Aorta (tissue), 5 donors: ENCODE measurements at regions of chr4 and their contacts with region 1.

Region 1: GRCh38 chr4:133154725-133155124 is 5.6 kb downstream of the PCDH10 start:
- DNase-seq: no peak
- ATAC-seq: no peak
- H3K4me3 ChIP-seq: no peak overlapping the region
- H3K27ac ChIP-seq: no peak overlapping the region
- H3K4me1 ChIP-seq: no peaks in the 10 kb centered on the region
- H3K27me3 ChIP-seq: no peaks in the 10 kb centered on the region

Region 2: GRCh38 chr4:133068083-133068482 is 86.6 kb before region 1 on chr4:
- intact Hi-C with region 1: no loop called
- DNase-seq: no peak
- ATAC-seq: no peak
- H3K4me3 ChIP-seq: no peak overlapping the region
- H3K27ac ChIP-seq: no peak overlapping the region
- H3K4me1 ChIP-seq: no peaks in the 10 kb centered on the region
- H3K27me3 ChIP-seq: no peaks in the 10 kb centered on the region

Region 3: GRCh38 chr4:133188433-133189175 is 33.9 kb after region 1 on chr4:
- intact Hi-C with region 1: loop called in 1 of 2 experiments (anchors 5 kb)
- DNase-seq: no peak
- ATAC-seq: no peak
- H3K4me3 ChIP-seq: no peak overlapping the region
- H3K27ac ChIP-seq: no peak overlapping the region
- H3K4me1 ChIP-seq: no peaks in the 10 kb centered on the region
- H3K27me3 ChIP-seq: no peaks in the 10 kb centered on the region

Region 4: DNA sequence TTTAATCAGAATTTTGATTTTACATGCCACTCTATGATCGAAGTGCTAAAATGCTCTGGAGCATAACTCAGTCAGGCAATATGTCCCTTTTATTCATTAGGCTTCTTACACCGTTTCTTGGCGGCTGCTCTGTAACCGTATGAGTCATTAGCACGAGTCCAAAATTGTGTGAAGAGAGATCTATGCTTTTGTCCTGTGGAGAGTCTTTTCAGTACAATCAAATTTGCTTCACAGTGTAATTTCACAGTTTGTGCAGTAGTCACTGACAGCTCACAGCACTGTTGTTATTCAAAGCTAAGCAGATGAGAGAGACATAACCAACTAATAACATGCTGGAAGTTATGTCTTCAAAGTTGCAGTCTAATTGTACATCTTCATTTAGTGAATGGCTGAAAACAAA is 162.2 kb after region 1 on chr4:
- intact Hi-C with region 1: loop called in 1 of 2 experiments (anchors 5 kb)
- DNase-seq: no peak
- ATAC-seq: no peak
- H3K4me3 ChIP-seq: no peak overlapping the region
- H3K27ac ChIP-seq: no peak overlapping the region
- H3K4me1 ChIP-seq: no peaks in the 10 kb centered on the region
- H3K27me3 ChIP-seq: no peaks in the 10 kb centered on the region

Region 5: GRCh38 chr4:133483600-133484246 is 329.0 kb after region 1 on chr4:
- intact Hi-C with region 1: loop called in 1 of 2 experiments (anchors 2 kb)
- DNase-seq: no peak
- ATAC-seq: peak; percentile 44
- H3K4me3 ChIP-seq: no peak overlapping the region
- H3K27ac ChIP-seq: no peak overlapping the region
- H3K4me1 ChIP-seq: no peaks in the 10 kb centered on the region
- H3K27me3 ChIP-seq: no peaks in the 10 kb centered on the region

Region 6: DNA sequence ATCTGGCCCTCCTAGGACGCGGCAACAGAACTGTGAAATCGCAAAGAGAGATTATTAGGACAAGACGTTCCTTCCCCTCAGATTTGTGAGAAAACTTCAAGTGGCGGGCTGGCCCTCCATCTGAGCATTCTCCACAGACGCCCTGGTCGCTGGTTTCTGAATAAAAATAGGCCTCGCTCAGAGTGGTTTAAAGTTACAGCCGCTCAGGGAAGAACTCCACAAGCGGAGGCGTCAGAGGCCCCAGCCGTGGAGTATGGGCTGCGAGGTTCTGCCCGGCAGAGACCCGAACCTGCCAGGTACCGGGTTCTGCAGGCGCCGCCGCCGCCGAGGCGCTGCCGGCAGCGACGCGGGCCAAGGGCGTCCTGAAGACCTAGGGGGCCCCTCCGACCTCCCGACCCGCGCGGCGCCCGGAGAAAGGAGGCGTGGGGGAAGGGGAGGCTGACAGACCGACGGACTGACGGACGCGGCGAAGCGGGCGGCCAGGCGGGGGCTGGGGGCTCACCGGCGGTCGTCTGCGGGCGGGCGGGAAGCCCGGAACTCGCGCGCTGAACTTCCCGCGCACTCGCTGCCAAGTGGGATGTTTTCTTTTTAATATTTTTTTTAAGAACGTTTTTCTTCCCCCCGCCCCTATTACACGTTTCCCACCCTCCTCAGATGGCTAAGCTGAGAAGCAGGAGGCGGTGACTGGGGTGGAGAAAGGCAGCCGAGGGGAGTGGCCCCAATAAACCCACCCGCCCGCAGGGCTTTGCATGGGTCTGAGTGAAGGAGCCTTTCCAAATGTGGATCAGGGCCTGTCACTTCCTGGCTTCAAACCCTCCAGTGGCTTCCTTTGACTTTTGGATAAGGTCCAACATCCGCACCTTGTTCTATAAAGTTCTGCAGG is 1046.7 kb after region 1 on chr4 and contains the start of gene PABPC4L:
- intact Hi-C with region 1: loop called in 1 of 2 experiments (anchors 5 kb)
- DNase-seq: peak; percentile 68 to 82
- ATAC-seq: peak; percentile 89
- H3K4me3 ChIP-seq: peak within 1 kb of the TSS; percentile 64 to 75
- H3K27ac ChIP-seq: peak within 1 kb of the TSS; percentile 22 to 62
- H3K4me1 ChIP-seq: no peaks in the 10 kb centered on the region
- H3K27me3 ChIP-seq: no peaks in the 10 kb centered on the region
- total RNA-seq, gene PABPC4L: 3.0 to 3.9 TPM